PC-3 (cell line): ENCODE measurements at regions of chr2 and their contacts with region 1.

Region 1: DNA sequence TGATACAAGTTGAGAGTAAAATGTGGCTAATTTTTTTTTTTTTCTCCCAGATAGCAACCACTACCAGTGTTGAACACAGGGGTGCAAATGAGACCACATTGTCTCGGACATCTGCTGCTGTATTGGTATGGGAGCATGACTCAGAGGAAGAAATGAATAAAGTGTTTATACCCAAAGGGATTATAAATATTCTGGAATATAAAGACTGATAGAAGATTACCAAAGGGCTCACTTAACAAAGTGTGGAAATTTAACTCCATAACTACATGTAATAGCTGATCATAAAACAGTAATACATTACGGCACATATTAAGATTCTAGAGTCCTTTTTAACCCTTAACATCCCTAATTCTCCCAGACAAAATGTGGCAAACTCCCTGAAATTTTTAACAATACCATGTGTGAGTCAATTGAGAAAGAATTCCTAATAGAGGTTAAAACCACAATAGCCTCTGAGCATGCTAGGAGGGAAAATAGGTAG is 1023.0 kb upstream of the ACVR2A start:
- DNase-seq: peak; percentile 65
- ATAC-seq: peak; percentile 75
- H3K4me3 ChIP-seq: peak overlapping the region; percentile 4; the same call in 1 of the 2 replicates
- H3K27ac ChIP-seq: peak overlapping the region; percentile 49
- H3K4me1 ChIP-seq: peaks cover 54% of the 10 kb centered on the region
- H3K27me3 ChIP-seq: no peaks in the 10 kb centered on the region
- CTCF ChIP-seq: no peak

Region 2: DNA sequence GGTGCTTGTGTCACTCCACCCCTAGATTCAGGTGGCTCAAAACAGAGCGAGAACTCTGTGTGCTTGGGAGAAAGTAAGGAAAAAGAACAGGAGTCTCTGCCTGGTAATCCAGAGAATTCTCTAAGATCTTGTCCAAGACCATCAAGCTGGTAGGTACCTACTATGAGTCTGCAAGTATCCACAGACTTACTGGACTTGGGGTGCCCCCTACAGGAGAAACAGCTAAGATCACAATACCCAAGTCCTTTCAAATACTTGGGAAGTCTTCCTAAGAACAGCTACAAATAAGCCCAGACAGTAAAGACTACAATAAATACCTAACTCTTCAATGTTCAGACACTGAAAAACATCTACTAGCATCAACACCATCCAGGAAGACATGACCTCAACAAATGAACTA is 120.7 kb before region 1 on chr2:
- CTCF ChIA-PET with region 1: no interaction called
- POLR2A ChIA-PET with region 1: no interaction called
- intact Hi-C with region 1: no loop called
- DNase-seq: peak; percentile 46
- ATAC-seq: no peak
- H3K4me3 ChIP-seq: no peak overlapping the region
- H3K27ac ChIP-seq: no peak overlapping the region
- H3K4me1 ChIP-seq: no peaks in the 10 kb centered on the region
- H3K27me3 ChIP-seq: no peaks in the 10 kb centered on the region
- CTCF ChIP-seq: peak; percentile 54

Region 3: GRCh38 chr2:146741260-146741659 is 80.6 kb before region 1 on chr2:
- CTCF ChIA-PET with region 1: no interaction called
- POLR2A ChIA-PET with region 1: no interaction called
- intact Hi-C with region 1: loop called (anchors 5 kb)
- DNase-seq: peak; percentile 63
- ATAC-seq: peak; percentile 91
- H3K4me3 ChIP-seq: no peak overlapping the region
- H3K27ac ChIP-seq: peak overlapping the region; percentile 52
- H3K4me1 ChIP-seq: peaks cover 17% of the 10 kb centered on the region
- H3K27me3 ChIP-seq: no peaks in the 10 kb centered on the region
- CTCF ChIP-seq: no peak

Region 4: GRCh38 chr2:146874260-146874658 is 52.4 kb after region 1 on chr2:
- CTCF ChIA-PET with region 1: no interaction called
- POLR2A ChIA-PET with region 1: no interaction called
- intact Hi-C with region 1: loop called (anchors 2 kb)
- DNase-seq: peak; percentile 98
- ATAC-seq: peak; percentile 95
- H3K4me3 ChIP-seq: peak overlapping the region; percentile 39
- H3K27ac ChIP-seq: peak overlapping the region; percentile 89
- H3K4me1 ChIP-seq: peaks cover 25% of the 10 kb centered on the region
- H3K27me3 ChIP-seq: no peaks in the 10 kb centered on the region
- CTCF ChIP-seq: no peak

Region 5: DNA sequence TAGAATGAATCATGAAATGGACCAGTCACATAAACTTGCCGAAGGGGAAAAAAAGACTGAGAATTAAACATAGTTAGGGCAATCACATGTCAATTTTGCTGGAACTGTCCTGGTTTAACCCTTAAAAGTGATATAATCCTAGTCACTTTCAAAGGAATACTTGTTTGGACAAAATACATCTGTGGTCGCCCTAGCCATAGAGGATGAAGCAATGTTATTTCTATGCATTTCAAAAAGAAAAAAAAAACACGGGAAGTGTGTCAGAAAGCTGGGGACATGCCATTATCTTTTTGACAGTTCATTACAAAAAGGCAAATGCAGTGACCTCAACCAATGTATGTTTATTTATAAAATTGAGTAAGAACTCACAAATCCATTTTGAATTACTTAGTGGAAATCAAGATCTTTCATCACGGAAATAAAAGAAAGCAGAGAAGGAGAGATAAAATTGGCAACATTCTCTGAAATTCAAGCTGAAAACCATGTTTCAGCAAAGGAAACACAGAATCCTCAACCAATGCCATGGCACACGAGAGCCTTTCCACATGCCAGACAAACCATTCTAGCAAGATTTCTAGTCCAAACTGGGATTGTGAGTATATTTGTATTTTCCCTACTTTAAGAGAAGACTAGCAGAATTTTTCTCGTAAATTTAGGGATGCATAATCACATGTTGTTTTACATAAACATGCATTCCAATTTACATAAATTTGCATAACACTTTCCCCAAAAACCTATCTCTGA is 168.6 kb after region 1 on chr2:
- CTCF ChIA-PET with region 1: no interaction called
- POLR2A ChIA-PET with region 1: no interaction called
- intact Hi-C with region 1: loop called (anchors 10 kb)
- DNase-seq: no peak
- ATAC-seq: no peak
- H3K4me3 ChIP-seq: no peak overlapping the region
- H3K27ac ChIP-seq: no peak overlapping the region
- H3K4me1 ChIP-seq: peaks cover 44% of the 10 kb centered on the region
- H3K27me3 ChIP-seq: no peaks in the 10 kb centered on the region
- CTCF ChIP-seq: no peak